ENCODE measurements at regions of chr11 and their contacts with region 1.

Region 1: GRCh38 chr11:62732801-62733200 is 4.5 kb downstream of the TTC9C start:
- DNase-seq: peak; percentile 41
- H3K4me3 ChIP-seq: no peak overlapping the region
- H3K27ac ChIP-seq: no peak overlapping the region
- H3K4me1 ChIP-seq: no peaks in the 10 kb centered on the region
- H3K27me3 ChIP-seq: no peaks in the 10 kb centered on the region
- CTCF ChIP-seq: no peak

Region 2: GRCh38 chr11:62771144-62772021 is 38.6 kb after region 1 on chr11 and contains the start of gene TAF6L:
- CTCF ChIA-PET with region 1: no interaction called
- dilution Hi-C with region 1: no loop called
- in situ Hi-C with region 1: no loop called
- intact Hi-C with region 1: loop called (anchors 1 kb)
- DNase-seq: peak; percentile 96
- H3K4me3 ChIP-seq: peak within 1 kb of the TSS; percentile 33 to 93 (median 55)
- H3K27ac ChIP-seq: peak within 1 kb of the TSS; percentile 53
- H3K4me1 ChIP-seq: peaks cover 16% of the 10 kb centered on the region
- H3K27me3 ChIP-seq: no peaks in the 10 kb centered on the region
- CTCF ChIP-seq: no peak
- total RNA-seq, gene TAF6L: 16.3 to 22.0 TPM

Measured in mammary epithelial cell (primary cell).